CD4-positive, alpha-beta memory T cell (primary cell): ENCODE measurements at regions of chr4 and their contacts with region 1.

Region 1: DNA sequence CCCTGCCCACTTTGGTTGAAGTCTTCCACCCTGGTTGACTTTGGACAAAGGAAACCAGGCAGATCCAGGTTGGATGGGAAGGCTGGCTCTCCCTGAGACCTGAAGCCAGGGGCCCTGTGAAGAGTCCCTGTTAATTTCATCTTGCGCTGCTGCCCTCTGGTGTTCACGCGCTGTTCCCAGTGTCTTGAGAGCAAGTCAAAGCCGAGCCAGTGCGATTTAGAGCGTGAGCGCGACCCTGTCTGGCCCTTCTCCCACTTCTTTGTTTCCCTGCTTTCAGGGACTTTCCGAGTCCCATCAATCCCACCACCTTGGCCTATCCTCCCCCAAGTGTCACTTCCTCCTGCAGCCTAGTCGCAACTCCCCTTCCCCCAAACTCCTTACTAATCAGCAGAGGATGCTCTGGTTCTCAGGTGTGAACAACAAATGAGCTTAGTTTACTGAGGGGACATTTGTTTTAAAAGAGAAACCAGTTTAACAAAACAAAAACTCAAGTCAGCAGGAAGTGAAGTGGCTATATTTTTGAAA is 25.8 kb upstream of the CHRNA9 start:
- DNase-seq: peak; percentile 84 to 93 (median 86)
- H3K4me3 ChIP-seq: peak overlapping the region in 1 of 2 donors; percentile 43
- H3K4me3 Mint-ChIP-seq: peak overlapping the region; percentile 74 to 92 (median 85)
- H3K27ac ChIP-seq: peak overlapping the region; percentile 74
- H3K27ac Mint-ChIP-seq: peak overlapping the region; percentile 93 to 99 (median 98)
- H3K4me1 ChIP-seq: peaks cover 79% of the 10 kb centered on the region
- H3K4me1 Mint-ChIP-seq: peaks cover 57 to 82% (median 67%) of the 10 kb centered on the region in 4 donors
- H3K27me3 ChIP-seq: no peaks in the 10 kb centered on the region
- H3K27me3 Mint-ChIP-seq: no peaks in the 10 kb centered on the region

Region 2: DNA sequence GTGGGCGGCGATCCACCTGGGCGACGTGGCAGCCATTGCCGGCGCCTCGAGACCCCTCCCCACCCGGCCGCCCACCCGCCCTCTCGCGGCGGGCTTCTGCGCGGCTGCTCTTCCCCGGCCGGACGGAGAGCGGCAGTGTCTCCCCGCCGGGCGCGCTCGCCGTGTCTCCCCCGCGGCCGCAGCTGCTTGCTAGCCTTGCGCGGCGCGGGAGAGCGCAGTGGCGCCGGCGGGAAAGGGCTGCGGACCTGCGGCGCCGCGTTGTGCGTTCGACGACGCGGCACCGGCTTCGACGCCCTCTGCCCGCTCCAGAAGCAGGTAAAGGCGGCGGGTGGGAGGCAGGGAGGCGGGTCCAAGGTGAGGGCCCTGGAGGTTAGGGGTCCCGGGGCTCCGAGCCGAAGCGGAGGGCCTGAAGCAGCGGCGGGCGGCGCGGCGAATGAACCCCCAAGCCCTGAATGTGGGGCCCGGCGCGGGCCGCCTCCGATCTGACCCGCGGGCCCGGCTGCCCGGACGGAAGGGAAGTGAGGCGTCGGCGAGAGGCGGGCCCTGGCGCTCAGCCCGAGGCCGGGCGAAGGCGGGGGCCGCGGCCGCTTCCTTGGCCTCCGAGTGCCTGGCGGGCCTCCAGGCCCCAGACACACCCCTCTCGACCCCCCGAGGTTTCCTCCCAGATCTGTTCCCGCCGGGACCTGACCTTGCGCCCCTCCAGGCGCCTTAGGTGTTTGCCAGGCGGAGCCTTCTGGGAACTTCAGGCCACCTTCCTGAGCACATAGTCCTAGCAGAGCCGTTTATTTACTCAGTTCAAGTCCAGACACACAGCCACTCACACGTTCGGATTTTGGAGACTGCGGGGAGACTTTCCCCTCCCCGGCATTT is 252.4 kb before region 1 on chr4 and contains the start of gene N4BP2:
- CTCF ChIA-PET with region 1: interaction called, 15 read pairs
- POLR2A ChIA-PET with region 1: interaction called, 52 read pairs
- intact Hi-C with region 1: loop called (anchors 5 kb)
- DNase-seq: peak; percentile 60 to 78 (median 75)
- H3K4me3 ChIP-seq: peak within 1 kb of the TSS; percentile 82 to 100
- H3K4me3 Mint-ChIP-seq: peak within 1 kb of the TSS; percentile 93 to 99 (median 97)
- H3K27ac ChIP-seq: peak within 1 kb of the TSS; percentile 75
- H3K27ac Mint-ChIP-seq: peak within 1 kb of the TSS; percentile 93 to 99 (median 97)
- H3K4me1 ChIP-seq: peaks cover 36% of the 10 kb centered on the region
- H3K4me1 Mint-ChIP-seq: peaks cover 18 to 48% (median 32%) of the 10 kb centered on the region in 4 donors
- H3K27me3 ChIP-seq: no peaks in the 10 kb centered on the region
- H3K27me3 Mint-ChIP-seq: no peaks in the 10 kb centered on the region
- total RNA-seq, gene N4BP2: 15.0 to 16.7 TPM

Region 3: GRCh38 chr4:40193016-40193571 is 116.2 kb before region 1 on chr4:
- CTCF ChIA-PET with region 1: interaction called, 115 read pairs
- POLR2A ChIA-PET with region 1: interaction called, 179 read pairs
- intact Hi-C with region 1: loop called (anchors 1 kb)
- DNase-seq: peak in 4 of 5 donors; percentile 53 to 62 (median 57)
- H3K4me3 ChIP-seq: peak overlapping the region; percentile 12 to 42
- H3K4me3 Mint-ChIP-seq: peak overlapping the region; percentile 78 to 96 (median 88)
- H3K27ac ChIP-seq: peak overlapping the region; percentile 99
- H3K27ac Mint-ChIP-seq: peak overlapping the region; percentile 96 to 100 (median 100)
- H3K4me1 ChIP-seq: peaks cover 52% of the 10 kb centered on the region
- H3K4me1 Mint-ChIP-seq: peaks cover 40 to 84% (median 56%) of the 10 kb centered on the region in 4 donors
- H3K27me3 ChIP-seq: no peaks in the 10 kb centered on the region
- H3K27me3 Mint-ChIP-seq: no peaks in the 10 kb centered on the region

Region 4: DNA sequence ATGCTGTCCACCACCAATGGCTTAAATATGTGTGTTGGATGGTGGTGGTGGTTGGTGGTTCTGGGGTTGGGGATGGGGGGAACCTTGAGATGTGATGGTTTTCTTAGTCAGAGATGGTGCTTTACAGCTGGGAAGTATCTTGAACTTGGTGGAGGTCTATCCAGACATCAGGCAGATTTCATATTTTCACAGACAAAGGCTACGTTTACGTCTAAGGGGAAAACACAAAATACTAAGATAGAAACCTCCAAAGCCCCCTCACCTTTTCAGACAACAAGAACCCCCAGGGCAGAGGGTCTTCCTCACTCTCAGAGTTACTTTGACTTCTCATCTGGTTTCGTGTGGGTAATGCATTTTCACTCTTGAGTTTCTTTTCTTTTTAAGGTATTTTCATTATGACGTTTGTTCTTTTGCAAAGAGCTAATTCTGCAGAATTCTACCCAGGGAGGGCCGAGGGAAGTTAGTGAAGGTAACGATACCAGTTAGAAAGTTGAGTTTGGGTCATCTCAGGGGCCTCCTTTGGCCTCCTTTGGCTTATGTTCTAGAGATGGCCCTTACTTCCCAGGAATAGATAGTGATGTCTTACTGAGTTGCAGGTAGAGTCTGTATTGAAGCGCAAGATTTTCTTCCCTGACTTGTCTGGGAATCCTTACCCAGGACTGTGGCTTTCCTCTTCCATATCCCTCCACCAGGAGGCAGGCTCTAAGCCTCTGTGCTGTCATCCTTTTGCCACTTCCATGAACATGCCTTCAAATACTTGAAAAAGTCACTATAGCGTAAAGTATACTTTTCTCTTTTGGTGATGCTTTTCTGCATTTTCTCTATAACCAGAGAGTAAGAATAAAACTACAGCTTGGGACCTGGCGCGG is 80.6 kb before region 1 on chr4:
- CTCF ChIA-PET with region 1: interaction called, 200 read pairs
- POLR2A ChIA-PET with region 1: interaction called, 79 read pairs
- intact Hi-C with region 1: loop called (anchors 1 kb)
- DNase-seq: no peak
- H3K4me3 ChIP-seq: peak overlapping the region in 1 of 2 donors; percentile 33
- H3K4me3 Mint-ChIP-seq: peak overlapping the region; percentile 69 to 93 (median 77)
- H3K27ac ChIP-seq: peak overlapping the region; percentile 72
- H3K27ac Mint-ChIP-seq: peak overlapping the region; percentile 92 to 100 (median 93)
- H3K4me1 ChIP-seq: peaks cover 100% of the 10 kb centered on the region
- H3K4me1 Mint-ChIP-seq: peaks cover 68 to 98% (median 84%) of the 10 kb centered on the region in 4 donors
- H3K27me3 ChIP-seq: no peaks in the 10 kb centered on the region
- H3K27me3 Mint-ChIP-seq: no peaks in the 10 kb centered on the region

Region 5: GRCh38 chr4:40255393-40256281 is 53.7 kb before region 1 on chr4:
- CTCF ChIA-PET with region 1: interaction called, 4 read pairs
- POLR2A ChIA-PET with region 1: interaction called, 48 read pairs
- intact Hi-C with region 1: no loop called
- DNase-seq: no peak
- H3K4me3 ChIP-seq: no peak overlapping the region
- H3K4me3 Mint-ChIP-seq: peak overlapping the region in 5 of 8 donors; percentile 5 to 70 (median 56)
- H3K27ac ChIP-seq: no peak overlapping the region
- H3K27ac Mint-ChIP-seq: peak overlapping the region; percentile 24 to 86 (median 81)
- H3K4me1 ChIP-seq: peaks cover 65% of the 10 kb centered on the region
- H3K4me1 Mint-ChIP-seq: peaks cover 32 to 70% (median 60%) of the 10 kb centered on the region in 4 donors
- H3K27me3 ChIP-seq: no peaks in the 10 kb centered on the region
- H3K27me3 Mint-ChIP-seq: no peaks in the 10 kb centered on the region

Region 6: GRCh38 chr4:40283968-40284367 is 25.3 kb before region 1 on chr4:
- CTCF ChIA-PET with region 1: interaction called, 271 read pairs
- POLR2A ChIA-PET with region 1: interaction called, 87 read pairs
- intact Hi-C with region 1: loop called (anchors 1 kb)
- DNase-seq: peak; percentile 71 to 97 (median 86)
- H3K4me3 ChIP-seq: no peak overlapping the region
- H3K4me3 Mint-ChIP-seq: peak overlapping the region in 7 of 8 donors; percentile 70 to 86 (median 79)
- H3K27ac ChIP-seq: peak overlapping the region; percentile 49
- H3K27ac Mint-ChIP-seq: peak overlapping the region; percentile 92 to 98 (median 96)
- H3K4me1 ChIP-seq: peaks cover 39% of the 10 kb centered on the region
- H3K4me1 Mint-ChIP-seq: peaks cover 34 to 73% (median 55%) of the 10 kb centered on the region in 4 donors
- H3K27me3 ChIP-seq: no peaks in the 10 kb centered on the region
- H3K27me3 Mint-ChIP-seq: peaks cover 0 to 2% of the 10 kb centered on the region in 2 donors

Region 7: DNA sequence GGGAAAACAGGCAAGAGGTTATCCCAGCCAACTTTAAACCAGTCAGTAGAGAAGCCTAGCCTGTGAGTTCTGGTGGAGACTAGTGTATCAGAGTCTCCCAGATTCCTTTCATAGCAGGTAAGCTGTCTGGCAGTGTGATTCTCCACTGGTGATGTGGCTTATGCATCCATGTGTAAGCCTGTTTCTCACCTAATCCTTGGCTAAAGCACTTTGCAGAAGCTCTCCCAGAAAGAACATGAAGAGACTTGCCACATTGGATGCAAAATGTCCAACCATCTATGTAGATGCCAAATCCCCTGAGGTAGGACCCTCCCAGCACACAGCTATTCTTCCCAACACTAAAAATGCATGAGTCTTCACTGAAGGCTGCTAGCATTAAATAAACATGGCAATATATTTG is 137.5 kb after region 1 on chr4:
- CTCF ChIA-PET with region 1: no interaction called
- POLR2A ChIA-PET with region 1: no interaction called
- intact Hi-C with region 1: no loop called
- DNase-seq: no peak
- H3K4me3 ChIP-seq: no peak overlapping the region
- H3K4me3 Mint-ChIP-seq: no peak overlapping the region
- H3K27ac ChIP-seq: no peak overlapping the region
- H3K27ac Mint-ChIP-seq: no peak overlapping the region
- H3K4me1 ChIP-seq: no peaks in the 10 kb centered on the region
- H3K4me1 Mint-ChIP-seq: peaks cover 2 to 5% (median 5%) of the 10 kb centered on the region in 4 donors
- H3K27me3 ChIP-seq: no peaks in the 10 kb centered on the region
- H3K27me3 Mint-ChIP-seq: no peaks in the 10 kb centered on the region